ENCODE measurements at regions of chr12 and their contacts with region 1.

Region 1: GRCh38 chr12:64890873-64891468 is 66.5 kb downstream of the TBC1D30 start:
- DNase-seq: no peak
- ATAC-seq: peak; percentile 42
- H3K4me3 Mint-ChIP-seq: no peak overlapping the region
- H3K27ac Mint-ChIP-seq: no peak overlapping the region
- H3K4me1 Mint-ChIP-seq: peaks cover 3% of the 10 kb centered on the region
- H3K27me3 Mint-ChIP-seq: peaks cover 14% of the 10 kb centered on the region

Region 2: DNA sequence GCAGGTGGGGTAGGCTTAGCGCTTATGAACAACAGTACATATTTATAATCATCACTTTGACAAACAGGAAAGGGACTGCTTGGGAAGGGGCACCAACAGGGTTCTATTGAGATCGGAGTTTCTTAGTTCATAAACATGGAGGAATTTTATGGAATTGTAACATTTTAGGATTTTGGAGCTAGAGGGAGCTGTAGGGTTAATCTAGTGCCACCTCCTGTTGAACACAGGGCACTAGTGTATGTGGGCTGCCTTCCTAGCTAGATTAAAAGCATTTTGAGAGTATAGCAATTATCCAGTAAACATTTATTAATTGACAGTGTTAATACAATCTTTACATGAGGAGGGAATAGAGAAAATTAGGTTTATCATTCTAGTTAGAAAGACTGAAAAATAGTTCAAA is 89.6 kb before region 1 on chr12:
- CTCF ChIA-PET with region 1: interaction called, 11 read pairs
- POLR2A ChIA-PET with region 1: no interaction called
- intact Hi-C with region 1: loop called in 1 of 2 experiments (anchors 5 kb)
- DNase-seq: no peak
- ATAC-seq: no peak
- H3K4me3 Mint-ChIP-seq: no peak overlapping the region
- H3K27ac Mint-ChIP-seq: no peak overlapping the region
- H3K4me1 Mint-ChIP-seq: no peaks in the 10 kb centered on the region
- H3K27me3 Mint-ChIP-seq: peaks cover 31% of the 10 kb centered on the region

Region 3: DNA sequence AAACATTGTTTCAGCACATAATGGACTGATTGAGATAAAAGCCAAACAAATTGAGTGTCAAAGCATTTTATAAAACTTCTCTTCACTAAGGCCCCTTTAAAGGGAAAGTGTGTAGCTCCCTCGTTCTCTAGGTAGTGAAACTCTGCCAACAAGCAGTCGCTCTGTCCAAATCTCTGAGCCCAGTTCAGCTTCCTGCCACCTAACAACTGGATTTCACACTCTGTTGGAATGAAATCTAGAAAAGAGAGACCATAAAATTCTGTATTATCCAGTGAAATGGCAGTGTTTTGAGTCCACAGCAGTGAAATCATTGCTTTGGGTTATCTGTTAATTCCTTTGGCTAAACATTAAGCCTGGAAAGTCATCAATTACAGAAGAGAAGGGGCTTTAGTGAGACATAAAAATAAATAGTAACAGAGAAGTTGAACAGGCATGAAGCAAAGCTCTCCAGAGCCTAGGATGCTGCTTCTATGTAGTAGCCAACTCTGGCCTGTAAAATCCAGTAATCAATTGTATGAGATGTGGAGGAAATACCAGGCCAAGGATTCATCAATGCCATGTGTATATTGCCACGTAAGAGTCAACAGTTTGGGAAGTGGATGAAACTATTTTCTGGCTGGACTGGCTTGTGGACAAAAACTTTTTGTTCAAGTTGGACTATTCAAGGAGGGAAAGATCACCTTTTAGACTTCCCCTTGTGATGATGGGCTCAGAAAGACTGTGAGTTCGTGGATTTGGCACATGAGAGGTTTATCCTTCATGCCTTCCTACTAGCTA is 107.6 kb after region 1 on chr12:
- CTCF ChIA-PET with region 1: no interaction called
- POLR2A ChIA-PET with region 1: no interaction called
- intact Hi-C with region 1: no loop called
- DNase-seq: no peak
- ATAC-seq: no peak
- H3K4me3 Mint-ChIP-seq: no peak overlapping the region
- H3K27ac Mint-ChIP-seq: no peak overlapping the region
- H3K4me1 Mint-ChIP-seq: no peaks in the 10 kb centered on the region
- H3K27me3 Mint-ChIP-seq: peaks cover 23% of the 10 kb centered on the region

Region 4: GRCh38 chr12:65106948-65107347 is 216.0 kb after region 1 on chr12:
- CTCF ChIA-PET with region 1: interaction called, 8 read pairs
- POLR2A ChIA-PET with region 1: no interaction called
- intact Hi-C with region 1: loop called in 1 of 2 experiments (anchors 5 kb)
- DNase-seq: no peak
- ATAC-seq: no peak
- H3K4me3 Mint-ChIP-seq: no peak overlapping the region
- H3K27ac Mint-ChIP-seq: no peak overlapping the region
- H3K4me1 Mint-ChIP-seq: no peaks in the 10 kb centered on the region
- H3K27me3 Mint-ChIP-seq: peaks cover 11% of the 10 kb centered on the region

Region 5: DNA sequence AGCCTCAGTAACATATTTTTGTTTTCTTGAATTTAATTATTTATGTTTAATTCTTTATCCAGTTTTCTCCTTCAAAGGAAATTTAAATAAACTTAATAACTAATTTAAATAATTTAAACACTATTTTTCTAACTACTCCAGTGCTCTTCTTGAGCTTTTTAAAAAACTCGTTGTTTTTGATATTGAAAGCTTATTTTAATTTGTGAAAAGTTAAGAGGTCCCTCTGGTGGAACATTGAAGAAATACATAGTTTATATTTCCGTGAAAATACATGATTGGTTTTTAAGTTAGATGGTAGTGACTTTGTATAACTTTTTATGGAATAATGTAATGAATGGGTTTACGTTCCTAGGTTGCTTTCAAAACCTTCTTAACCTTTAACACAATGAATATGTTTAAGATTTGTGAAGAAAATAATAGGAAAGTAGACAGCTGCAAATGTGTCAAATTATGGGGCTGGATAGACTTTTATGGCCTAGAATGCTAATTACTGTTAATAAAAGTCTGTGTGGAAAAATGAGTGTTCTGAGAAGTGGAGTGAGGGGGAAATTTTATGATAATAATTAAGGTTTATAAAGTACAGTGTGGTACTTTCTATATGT is 341.6 kb after region 1 on chr12:
- CTCF ChIA-PET with region 1: interaction called, 15 read pairs
- POLR2A ChIA-PET with region 1: no interaction called
- intact Hi-C with region 1: loop called (anchors 1 to 2 kb)
- DNase-seq: no peak
- ATAC-seq: no peak
- H3K4me3 Mint-ChIP-seq: no peak overlapping the region
- H3K27ac Mint-ChIP-seq: no peak overlapping the region
- H3K4me1 Mint-ChIP-seq: peaks cover 13% of the 10 kb centered on the region
- H3K27me3 Mint-ChIP-seq: no peaks in the 10 kb centered on the region

Region 6: GRCh38 chr12:65986047-65986446 is 1095.1 kb after region 1 on chr12:
- CTCF ChIA-PET with region 1: no interaction called
- POLR2A ChIA-PET with region 1: no interaction called
- intact Hi-C with region 1: loop called (anchors 1 to 5 kb)
- DNase-seq: no peak
- ATAC-seq: no peak
- H3K4me3 Mint-ChIP-seq: no peak overlapping the region
- H3K27ac Mint-ChIP-seq: no peak overlapping the region
- H3K4me1 Mint-ChIP-seq: no peaks in the 10 kb centered on the region
- H3K27me3 Mint-ChIP-seq: peaks cover 5% of the 10 kb centered on the region

Region 7: DNA sequence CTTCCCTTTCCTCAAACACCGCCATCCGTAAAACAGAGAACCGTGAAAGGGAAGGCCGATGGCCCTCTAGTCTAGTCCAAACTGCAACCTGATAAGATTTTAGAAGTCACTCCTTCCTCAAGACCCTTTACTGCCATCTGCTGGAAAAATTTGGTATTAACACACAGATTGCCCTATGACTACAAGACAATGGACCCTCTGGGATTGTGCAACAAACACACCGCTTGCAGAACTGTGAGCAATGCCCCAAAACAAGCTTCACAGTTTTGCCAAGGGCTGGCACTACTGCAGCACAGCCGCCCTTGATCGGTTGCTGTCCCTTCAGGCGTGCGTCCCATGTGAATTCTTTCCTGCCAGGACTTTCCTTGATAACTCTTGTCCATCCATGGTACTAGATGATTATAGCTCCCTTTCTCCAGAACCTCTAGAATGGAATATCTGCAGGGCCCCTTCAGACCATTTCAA is 1216.5 kb after region 1 on chr12:
- CTCF ChIA-PET with region 1: no interaction called
- POLR2A ChIA-PET with region 1: no interaction called
- intact Hi-C with region 1: loop called (anchors 1 to 5 kb)
- DNase-seq: peak; percentile 51
- ATAC-seq: peak; percentile 92
- H3K4me3 Mint-ChIP-seq: no peak overlapping the region
- H3K27ac Mint-ChIP-seq: no peak overlapping the region
- H3K4me1 Mint-ChIP-seq: peaks cover 2% of the 10 kb centered on the region
- H3K27me3 Mint-ChIP-seq: peaks cover 10% of the 10 kb centered on the region

Measured in activated CD4-positive, alpha-beta T cell treated with anti-CD3 and anti-CD28 coated beads for 36 hours (primary cell).